ENCODE measurements at regions of chr22 and their contacts with region 1.

Region 1: DNA sequence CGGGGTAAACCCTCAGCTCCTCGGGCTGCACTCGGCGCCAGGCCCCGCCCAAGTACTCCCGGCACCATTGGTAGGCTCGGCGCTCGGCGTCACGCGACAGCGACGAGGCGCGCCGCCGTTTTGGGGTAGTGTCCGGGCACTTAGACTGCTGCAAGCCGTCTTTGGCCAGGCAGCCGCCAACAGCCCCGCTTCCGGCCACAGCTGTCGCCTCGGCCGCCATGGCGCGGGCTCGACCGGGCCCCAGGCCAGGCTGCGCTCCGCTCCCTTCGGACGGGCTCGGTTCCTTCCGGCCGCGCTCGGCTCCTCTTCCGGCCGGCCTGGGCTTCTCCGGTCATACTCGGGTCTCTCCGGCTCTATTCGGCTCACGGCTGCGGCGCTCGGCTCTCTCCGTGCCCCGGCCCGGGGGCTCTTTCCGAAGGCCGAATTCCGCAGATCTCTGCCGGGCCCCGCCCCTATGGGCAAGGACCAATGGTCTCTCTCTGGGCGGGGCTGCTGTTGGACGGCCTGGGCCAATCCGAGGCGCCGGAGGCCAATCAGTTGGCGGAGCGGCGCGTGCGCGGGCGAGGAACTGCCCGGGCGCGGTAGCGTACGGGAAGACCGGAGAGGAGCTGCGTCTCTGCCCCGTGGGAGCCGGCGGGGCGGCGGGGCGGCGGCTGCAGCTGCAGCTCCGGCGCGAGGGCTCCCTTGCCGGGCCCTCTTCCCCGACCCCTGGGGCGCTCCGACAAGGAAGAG is at the start of gene CHKB:
- DNase-seq: peak; percentile 98
- ATAC-seq: peak; percentile 94
- H3K4me3 ChIP-seq: peak within 1 kb of the TSS; percentile 58 to 91 (median 80)
- H3K4me3 Mint-ChIP-seq: peak within 1 kb of the TSS; percentile 89
- H3K27ac ChIP-seq: peak within 1 kb of the TSS; percentile 82 to 96
- H3K27ac Mint-ChIP-seq: peak within 1 kb of the TSS; percentile 93
- H3K4me1 ChIP-seq: peaks cover 14 to 18% of the 10 kb centered on the region in 2 donors
- H3K4me1 Mint-ChIP-seq: peaks cover 24% of the 10 kb centered on the region
- H3K27me3 ChIP-seq: no peaks in the 10 kb centered on the region
- H3K27me3 Mint-ChIP-seq: no peaks in the 10 kb centered on the region
- CTCF ChIP-seq: no peak
- total RNA-seq, gene CHKB: 238 and 239 TPM in 2 replicates

Region 2: GRCh38 chr22:50250555-50251476 is 331.9 kb before region 1 on chr22 and contains the start of gene HDAC10:
- CTCF ChIA-PET with region 1: no interaction called
- POLR2A ChIA-PET with region 1: no interaction called
- intact Hi-C with region 1: loop called (anchors 5 kb)
- DNase-seq: peak; percentile 85
- ATAC-seq: peak; percentile 84
- H3K4me3 ChIP-seq: peak within 1 kb of the TSS; percentile 56 to 81 (median 79)
- H3K4me3 Mint-ChIP-seq: peak within 1 kb of the TSS; percentile 86
- H3K27ac ChIP-seq: peak within 1 kb of the TSS; percentile 41 to 49
- H3K27ac Mint-ChIP-seq: peak within 1 kb of the TSS; percentile 76
- H3K4me1 ChIP-seq: peaks cover 15 to 44% of the 10 kb centered on the region in 2 donors
- H3K4me1 Mint-ChIP-seq: peaks cover 24% of the 10 kb centered on the region
- H3K27me3 ChIP-seq: no peaks in the 10 kb centered on the region
- H3K27me3 Mint-ChIP-seq: no peaks in the 10 kb centered on the region
- CTCF ChIP-seq: no peak
- total RNA-seq, gene HDAC10: 120 and 136 TPM in 2 replicates

Region 3: DNA sequence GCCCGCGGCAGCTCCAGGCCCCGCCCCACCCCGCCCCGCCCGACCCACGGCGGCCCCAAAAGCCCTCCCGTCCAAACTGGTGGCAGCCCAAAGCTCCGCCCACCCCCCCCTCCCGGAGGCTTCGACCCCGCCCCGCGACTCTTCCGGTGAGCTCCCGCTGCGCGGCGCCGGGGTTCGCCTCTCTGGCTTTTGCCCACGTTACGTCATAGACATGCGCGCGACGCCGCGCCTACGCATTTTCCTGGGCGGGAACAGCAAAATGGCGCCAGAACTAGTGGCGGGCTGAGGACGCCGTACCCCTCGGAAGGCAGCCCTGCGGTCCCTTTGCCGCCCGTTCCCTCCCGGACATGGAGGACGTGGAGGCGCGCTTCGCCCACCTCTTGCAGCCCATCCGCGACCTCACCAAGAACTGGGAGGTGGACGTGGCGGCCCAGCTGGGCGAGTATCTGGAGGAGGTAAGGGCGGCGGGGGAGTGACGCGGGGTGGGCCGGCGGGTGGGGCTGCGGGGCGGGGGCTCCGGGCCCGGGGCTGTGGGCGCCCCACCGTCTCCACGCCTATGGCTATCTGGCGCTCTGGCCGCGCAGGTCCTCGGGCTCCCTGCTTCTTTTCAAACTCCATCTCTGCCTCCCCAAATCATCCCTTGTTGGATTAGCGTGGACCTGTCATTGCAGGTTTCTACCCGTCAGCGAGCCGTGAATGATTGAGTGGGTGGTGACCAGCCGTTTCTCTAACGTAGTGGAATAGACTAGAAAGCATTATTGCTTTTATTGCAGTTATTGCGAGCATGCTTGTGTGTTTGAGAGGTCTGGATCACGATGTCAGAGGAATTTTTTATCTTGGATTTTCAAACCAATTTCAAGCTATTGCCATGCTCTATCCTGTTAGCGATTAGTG is 74.5 kb before region 1 on chr22 and contains the start of gene NCAPH2:
- CTCF ChIA-PET with region 1: interaction called, 3 read pairs
- POLR2A ChIA-PET with region 1: interaction called, 8 read pairs
- intact Hi-C with region 1: loop called (anchors 1 kb)
- DNase-seq: peak; percentile 98
- ATAC-seq: peak; percentile 71
- H3K4me3 ChIP-seq: peak within 1 kb of the TSS; percentile 75 to 92 (median 91)
- H3K4me3 Mint-ChIP-seq: peak within 1 kb of the TSS; percentile 95
- H3K27ac ChIP-seq: peak within 1 kb of the TSS; percentile 88 to 92
- H3K27ac Mint-ChIP-seq: peak within 1 kb of the TSS; percentile 98
- H3K4me1 ChIP-seq: peaks cover 19 to 29% of the 10 kb centered on the region in 2 donors
- H3K4me1 Mint-ChIP-seq: peaks cover 28% of the 10 kb centered on the region
- H3K27me3 ChIP-seq: no peaks in the 10 kb centered on the region
- H3K27me3 Mint-ChIP-seq: no peaks in the 10 kb centered on the region
- CTCF ChIP-seq: no peak
- total RNA-seq, gene NCAPH2: 71.5 and 76.9 TPM in 2 replicates

Region 4: GRCh38 chr22:50627642-50628542 is 45.2 kb after region 1 on chr22 and contains the start of gene ARSA:
- CTCF ChIA-PET with region 1: no interaction called
- POLR2A ChIA-PET with region 1: no interaction called
- intact Hi-C with region 1: loop called (anchors 2 kb)
- DNase-seq: peak; percentile 89
- ATAC-seq: peak; percentile 94
- H3K4me3 ChIP-seq: peak within 1 kb of the TSS; percentile 72 to 92 (median 80)
- H3K4me3 Mint-ChIP-seq: peak within 1 kb of the TSS; percentile 94
- H3K27ac ChIP-seq: peak within 1 kb of the TSS; percentile 64 to 72
- H3K27ac Mint-ChIP-seq: peak within 1 kb of the TSS; percentile 80
- H3K4me1 ChIP-seq: peaks cover 14 to 25% of the 10 kb centered on the region in 2 donors
- H3K4me1 Mint-ChIP-seq: peaks cover 19% of the 10 kb centered on the region
- H3K27me3 ChIP-seq: no peaks in the 10 kb centered on the region
- H3K27me3 Mint-ChIP-seq: no peaks in the 10 kb centered on the region
- CTCF ChIP-seq: peak; percentile 38
- total RNA-seq, gene ARSA: 77.1 and 82.0 TPM in 2 replicates